Natural killer cell (primary cell): ENCODE measurements at regions of chr11 and their contacts with region 1.

Region 1: GRCh38 chr11:14300661-14301304 is 58.2 kb downstream of the RRAS2 start:
- DNase-seq: peak; percentile 43 to 74
- ATAC-seq: peak; percentile 83 to 98 (median 95)
- H3K4me3 ChIP-seq: no peak overlapping the region
- H3K4me3 Mint-ChIP-seq: no peak overlapping the region
- H3K27ac ChIP-seq: no peak overlapping the region
- H3K27ac Mint-ChIP-seq: no peak overlapping the region
- H3K4me1 ChIP-seq: peaks cover 36% of the 10 kb centered on the region
- H3K4me1 Mint-ChIP-seq: peaks cover 24 to 54% of the 10 kb centered on the region in 2 donors
- H3K27me3 ChIP-seq: no peaks in the 10 kb centered on the region
- H3K27me3 Mint-ChIP-seq: no peaks in the 10 kb centered on the region
- CTCF ChIP-seq: peak; percentile 81

Region 2: DNA sequence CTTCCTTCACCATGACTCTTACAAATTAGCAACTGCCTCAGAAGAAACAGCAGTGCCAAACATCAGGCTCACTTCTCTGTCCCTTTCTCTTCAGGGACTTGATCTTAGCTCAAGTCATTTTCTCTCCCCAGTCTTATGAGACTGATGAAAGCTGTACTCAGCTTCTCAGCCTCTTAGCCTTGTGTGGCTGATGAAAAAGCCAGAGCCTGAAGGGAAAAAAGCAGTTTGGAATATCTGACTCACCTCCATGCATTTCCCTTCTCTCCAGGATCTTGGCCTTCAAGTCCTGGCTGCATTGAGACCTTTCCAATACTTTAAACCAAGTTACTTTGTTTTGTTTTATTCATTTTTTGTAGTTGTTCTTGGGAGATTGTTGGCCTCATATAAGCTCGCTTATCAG is 142.4 kb before region 1 on chr11:
- intact Hi-C with region 1: no loop called
- DNase-seq: no peak
- ATAC-seq: no peak
- H3K4me3 ChIP-seq: no peak overlapping the region
- H3K4me3 Mint-ChIP-seq: no peak overlapping the region
- H3K27ac ChIP-seq: no peak overlapping the region
- H3K27ac Mint-ChIP-seq: no peak overlapping the region
- H3K4me1 ChIP-seq: no peaks in the 10 kb centered on the region
- H3K4me1 Mint-ChIP-seq: no peaks in the 10 kb centered on the region
- H3K27me3 ChIP-seq: no peaks in the 10 kb centered on the region
- H3K27me3 Mint-ChIP-seq: peaks cover 1 to 9% of the 10 kb centered on the region in 2 donors
- CTCF ChIP-seq: no peak

Region 3: GRCh38 chr11:14358729-14359439 is 58.1 kb after region 1 on chr11 and contains the start of gene RRAS2:
- intact Hi-C with region 1: loop called (anchors 2 kb)
- DNase-seq: peak; percentile 75 to 88
- ATAC-seq: peak; percentile 85 to 92 (median 91)
- H3K4me3 ChIP-seq: peak within 1 kb of the TSS; percentile 93
- H3K4me3 Mint-ChIP-seq: peak within 1 kb of the TSS; percentile 93
- H3K27ac ChIP-seq: peak within 1 kb of the TSS; percentile 75
- H3K27ac Mint-ChIP-seq: peak within 1 kb of the TSS; percentile 90 to 97
- H3K4me1 ChIP-seq: peaks cover 25% of the 10 kb centered on the region
- H3K4me1 Mint-ChIP-seq: peaks cover 40 to 46% of the 10 kb centered on the region in 2 donors
- H3K27me3 ChIP-seq: no peaks in the 10 kb centered on the region
- H3K27me3 Mint-ChIP-seq: no peaks in the 10 kb centered on the region
- CTCF ChIP-seq: no peak
- total RNA-seq, gene RRAS2: 62.1 to 86.7 (median 69.6) TPM

Region 4: GRCh38 chr11:14413307-14414069 is 112.7 kb after region 1 on chr11:
- intact Hi-C with region 1: loop called (anchors 1 kb)
- DNase-seq: no peak
- ATAC-seq: no peak
- H3K4me3 ChIP-seq: no peak overlapping the region
- H3K4me3 Mint-ChIP-seq: no peak overlapping the region
- H3K27ac ChIP-seq: no peak overlapping the region
- H3K27ac Mint-ChIP-seq: peak overlapping the region; percentile 94 to 95
- H3K4me1 ChIP-seq: peaks cover 21% of the 10 kb centered on the region
- H3K4me1 Mint-ChIP-seq: peaks cover 55 to 59% of the 10 kb centered on the region in 2 donors
- H3K27me3 ChIP-seq: no peaks in the 10 kb centered on the region
- H3K27me3 Mint-ChIP-seq: no peaks in the 10 kb centered on the region
- CTCF ChIP-seq: no peak

Region 5: DNA sequence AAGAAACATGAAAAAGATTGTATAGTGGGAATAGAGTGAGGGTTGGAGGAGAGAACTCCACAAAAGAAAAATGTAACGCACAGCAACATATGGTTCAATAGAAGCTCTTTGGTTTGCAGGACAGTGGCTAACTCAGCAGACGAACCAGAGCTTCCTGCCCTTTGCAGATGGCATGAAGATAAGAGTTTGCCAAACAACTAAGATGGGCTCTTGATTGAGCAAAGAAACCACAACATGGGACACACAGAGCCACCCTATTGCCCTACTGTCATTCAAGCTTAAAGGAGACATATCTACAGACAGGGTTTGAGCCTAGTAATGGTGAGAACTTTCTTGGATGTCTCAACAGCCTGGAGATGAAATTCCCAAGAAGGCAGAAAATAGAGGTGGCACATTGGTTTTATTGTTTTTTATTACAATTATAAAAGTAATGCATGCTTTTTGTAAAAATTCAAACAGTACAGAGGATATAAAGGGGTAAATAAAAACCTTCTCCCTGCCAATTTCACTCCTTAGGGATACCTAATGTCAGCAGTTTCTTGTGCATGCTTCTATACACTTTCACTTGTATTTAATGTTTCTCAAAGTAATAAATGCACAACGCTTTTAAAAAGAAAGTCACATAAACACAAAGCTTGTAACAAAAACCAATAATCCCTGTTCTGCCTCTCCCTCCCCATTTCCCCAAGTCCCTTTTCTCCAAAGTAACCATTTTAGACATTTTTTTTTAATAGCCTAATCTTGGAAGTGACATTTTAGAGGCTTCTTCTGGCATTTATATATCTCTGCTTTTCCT is 135.1 kb after region 1 on chr11:
- intact Hi-C with region 1: loop called (anchors 5 kb)
- DNase-seq: peak in 1 of 2 donors; percentile 45
- ATAC-seq: peak; percentile 79 to 95 (median 80)
- H3K4me3 ChIP-seq: no peak overlapping the region
- H3K4me3 Mint-ChIP-seq: peak overlapping the region; percentile 71
- H3K27ac ChIP-seq: no peak overlapping the region
- H3K27ac Mint-ChIP-seq: peak overlapping the region in 1 of 2 donors; percentile 40
- H3K4me1 ChIP-seq: peaks cover 33% of the 10 kb centered on the region
- H3K4me1 Mint-ChIP-seq: peaks cover 58 to 60% of the 10 kb centered on the region in 2 donors
- H3K27me3 ChIP-seq: no peaks in the 10 kb centered on the region
- H3K27me3 Mint-ChIP-seq: no peaks in the 10 kb centered on the region
- CTCF ChIP-seq: no peak

Region 6: GRCh38 chr11:14454861-14455632 is 154.3 kb after region 1 on chr11:
- intact Hi-C with region 1: loop called (anchors 1 kb)
- DNase-seq: peak in 1 of 2 donors; percentile 65
- ATAC-seq: peak; percentile 49 to 67 (median 58)
- H3K4me3 ChIP-seq: no peak overlapping the region
- H3K4me3 Mint-ChIP-seq: no peak overlapping the region
- H3K27ac ChIP-seq: no peak overlapping the region
- H3K27ac Mint-ChIP-seq: no peak overlapping the region
- H3K4me1 ChIP-seq: peaks cover 6% of the 10 kb centered on the region
- H3K4me1 Mint-ChIP-seq: peaks cover 14 to 17% of the 10 kb centered on the region in 2 donors
- H3K27me3 ChIP-seq: no peaks in the 10 kb centered on the region
- H3K27me3 Mint-ChIP-seq: no peaks in the 10 kb centered on the region
- CTCF ChIP-seq: peak; percentile 79